ENCODE measurements at regions of chr16 and their contacts with region 1.

Region 1: DNA sequence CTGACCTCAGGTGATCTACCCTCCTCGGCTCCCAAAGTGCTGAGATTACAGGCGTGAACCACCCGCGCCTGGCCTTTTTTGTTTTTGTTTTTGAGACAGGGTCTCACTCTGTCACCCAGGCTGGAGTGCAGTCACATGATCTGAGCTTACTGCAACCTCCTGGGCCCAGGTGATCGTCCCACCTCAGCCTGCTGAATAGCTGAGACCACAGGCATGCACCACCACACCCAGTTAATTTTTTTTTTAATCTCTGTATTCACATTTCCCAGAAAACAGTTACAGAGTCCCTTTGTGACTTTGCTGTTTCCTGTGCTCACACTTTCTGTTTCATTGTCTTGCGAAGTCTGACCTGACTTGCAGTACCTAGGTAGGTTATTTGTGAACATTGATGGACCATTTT is 2.7 kb downstream of the CLUAP1 start:
- DNase-seq: peak in 1 of 2 donors; percentile 66
- ATAC-seq: no peak
- H3K4me3 ChIP-seq: no peak overlapping the region
- H3K4me3 Mint-ChIP-seq: peak overlapping the region; percentile 31
- H3K27ac ChIP-seq: peak overlapping the region; percentile 0
- H3K27ac Mint-ChIP-seq: peak overlapping the region; percentile 45 to 67
- H3K4me1 ChIP-seq: peaks cover 40% of the 10 kb centered on the region
- H3K4me1 Mint-ChIP-seq: peaks cover 25 to 40% of the 10 kb centered on the region in 2 donors
- H3K27me3 ChIP-seq: no peaks in the 10 kb centered on the region
- H3K27me3 Mint-ChIP-seq: no peaks in the 10 kb centered on the region
- CTCF ChIP-seq: no peak

Region 2: GRCh38 chr16:3182608-3183444 is 320.7 kb before region 1 on chr16:
- intact Hi-C with region 1: loop called (anchors 2 kb)
- DNase-seq: peak in 1 of 2 donors; percentile 70
- ATAC-seq: peak; percentile 69 to 81 (median 80)
- H3K4me3 ChIP-seq: peak overlapping the region; percentile 32
- H3K4me3 Mint-ChIP-seq: peak overlapping the region; percentile 83
- H3K27ac ChIP-seq: no peak overlapping the region
- H3K27ac Mint-ChIP-seq: peak overlapping the region; percentile 78 to 82
- H3K4me1 ChIP-seq: peaks cover 23% of the 10 kb centered on the region
- H3K4me1 Mint-ChIP-seq: peaks cover 27 to 28% of the 10 kb centered on the region in 2 donors
- H3K27me3 ChIP-seq: peaks cover 37% of the 10 kb centered on the region
- H3K27me3 Mint-ChIP-seq: peaks cover 65 to 73% of the 10 kb centered on the region in 2 donors
- CTCF ChIP-seq: peak; percentile 54

Region 3: DNA sequence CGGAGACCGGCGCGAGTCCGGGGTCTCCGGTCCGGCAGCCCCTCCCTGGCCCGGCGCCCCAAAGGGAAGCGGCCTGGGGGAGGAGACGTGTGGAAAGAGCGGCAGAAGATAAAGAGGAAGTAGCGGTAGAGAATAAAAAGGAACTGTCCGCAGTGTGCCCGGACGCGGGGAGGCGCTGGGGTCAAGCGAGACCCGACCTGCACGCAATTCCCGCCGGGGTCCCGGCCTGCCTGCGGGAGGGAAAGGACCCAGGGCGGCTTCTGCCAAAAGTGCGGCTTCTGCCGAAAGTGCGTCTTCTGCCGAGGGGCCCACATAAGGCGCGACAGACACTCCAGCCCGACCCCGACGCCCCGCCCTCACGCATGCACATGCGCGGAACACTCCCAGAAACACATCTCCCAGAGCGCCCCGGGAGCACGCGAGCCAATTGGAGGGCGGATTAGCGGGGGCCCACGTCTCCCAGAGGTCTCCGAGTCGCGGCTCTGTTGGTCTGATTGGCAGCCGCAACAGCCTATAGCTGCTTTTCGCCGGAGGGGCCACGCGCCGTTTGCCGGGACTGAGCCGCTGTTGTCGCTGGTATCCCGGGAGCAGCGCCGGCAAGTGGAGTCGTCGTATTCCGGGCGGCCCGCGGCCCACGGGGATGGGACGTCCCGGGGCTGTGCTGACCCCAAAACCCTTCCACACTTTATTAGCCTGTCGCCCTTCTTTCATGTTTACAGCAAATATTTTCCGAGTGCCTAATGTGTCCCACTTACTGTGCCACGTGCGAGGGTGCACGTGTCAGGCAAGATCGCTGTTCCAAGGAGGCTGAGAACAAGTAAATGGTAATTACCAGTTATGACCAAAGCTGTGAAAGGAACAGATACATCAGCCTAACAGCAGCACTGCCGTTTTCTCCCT is 239.1 kb before region 1 on chr16:
- intact Hi-C with region 1: loop called (anchors 1 kb)
- DNase-seq: peak; percentile 93 to 97
- ATAC-seq: peak; percentile 87 to 90 (median 88)
- H3K4me3 ChIP-seq: peak overlapping the region; percentile 77
- H3K4me3 Mint-ChIP-seq: peak overlapping the region; percentile 90
- H3K27ac ChIP-seq: peak overlapping the region; percentile 95
- H3K27ac Mint-ChIP-seq: peak overlapping the region; percentile 92 to 93
- H3K4me1 ChIP-seq: peaks cover 17% of the 10 kb centered on the region
- H3K4me1 Mint-ChIP-seq: peaks cover 18 to 27% of the 10 kb centered on the region in 2 donors
- H3K27me3 ChIP-seq: no peaks in the 10 kb centered on the region
- H3K27me3 Mint-ChIP-seq: no peaks in the 10 kb centered on the region
- CTCF ChIP-seq: no peak

Region 4: DNA sequence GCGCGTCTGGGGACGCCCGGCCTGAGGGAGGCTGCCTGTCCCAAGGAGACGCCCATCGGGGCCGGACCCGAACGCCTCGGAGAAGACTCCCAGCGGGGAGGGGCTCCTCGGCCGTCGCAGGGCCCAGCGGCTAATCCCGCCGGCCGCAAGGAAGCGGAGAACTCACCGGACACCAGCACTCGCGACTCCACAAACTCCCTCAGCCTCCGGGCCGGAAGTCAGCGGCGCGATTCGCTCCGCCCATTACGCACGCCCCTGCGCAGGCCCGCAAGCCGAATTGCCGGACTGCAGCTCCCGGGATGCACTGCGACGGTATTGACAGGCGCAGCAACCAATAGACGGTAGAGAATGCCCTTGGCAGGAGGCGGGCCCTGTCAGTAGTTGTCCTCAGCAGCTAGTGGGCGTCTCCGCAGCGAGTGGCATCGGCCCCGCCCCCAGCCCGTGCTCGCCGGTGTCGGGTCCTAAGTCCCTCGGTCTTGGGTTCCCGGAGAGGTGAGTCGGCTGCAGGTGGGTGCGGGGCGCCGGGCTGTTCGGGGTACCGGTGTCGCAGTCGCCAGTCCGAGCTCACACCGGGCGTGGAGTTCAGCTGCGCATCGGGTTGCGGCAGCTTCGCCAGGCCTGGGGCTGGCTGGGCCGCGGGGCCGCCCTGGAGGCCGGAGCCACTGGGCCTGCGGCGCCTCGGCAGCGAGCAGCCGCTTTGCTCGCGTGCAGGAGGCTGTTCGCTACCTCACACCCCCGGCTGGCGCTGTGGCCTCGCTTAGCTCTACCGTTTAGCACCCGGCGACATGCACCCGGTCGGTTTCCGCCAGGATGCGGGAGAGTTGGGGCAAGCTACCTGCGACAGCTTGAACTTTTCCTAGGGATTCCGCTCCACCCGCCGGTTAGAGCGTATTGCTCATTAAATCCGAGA is 102.5 kb before region 1 on chr16 and contains the starts of genes ZNF174 and ZSCAN32:
- intact Hi-C with region 1: loop called (anchors 1 kb)
- DNase-seq: peak; percentile 98 to 99
- ATAC-seq: peak; percentile 96 to 99 (median 97)
- H3K4me3 ChIP-seq: peak within 1 kb of the TSS; percentile 68
- H3K4me3 Mint-ChIP-seq: peak within 1 kb of the TSS; percentile 95
- H3K27ac ChIP-seq: peak within 1 kb of the TSS; percentile 74
- H3K27ac Mint-ChIP-seq: peak within 1 kb of the TSS; percentile 87 to 90
- H3K4me1 ChIP-seq: peaks cover 19% of the 10 kb centered on the region
- H3K4me1 Mint-ChIP-seq: peaks cover 41 to 48% of the 10 kb centered on the region in 2 donors
- H3K27me3 ChIP-seq: no peaks in the 10 kb centered on the region
- H3K27me3 Mint-ChIP-seq: no peaks in the 10 kb centered on the region
- CTCF ChIP-seq: no peak
- total RNA-seq, gene ZNF174: 3.5 to 9.0 (median 7.5) TPM
- total RNA-seq, gene ZSCAN32: 7.5 to 14.2 (median 14.1) TPM

Region 5: GRCh38 chr16:3457434-3458252 is 45.9 kb before region 1 on chr16:
- intact Hi-C with region 1: loop called (anchors 1 kb)
- DNase-seq: peak; percentile 89 to 96
- ATAC-seq: peak; percentile 88 to 96 (median 91)
- H3K4me3 ChIP-seq: peak overlapping the region; percentile 66
- H3K4me3 Mint-ChIP-seq: peak overlapping the region; percentile 81
- H3K27ac ChIP-seq: peak overlapping the region; percentile 85
- H3K27ac Mint-ChIP-seq: peak overlapping the region; percentile 75 to 86
- H3K4me1 ChIP-seq: peaks cover 40% of the 10 kb centered on the region
- H3K4me1 Mint-ChIP-seq: peaks cover 44 to 47% of the 10 kb centered on the region in 2 donors
- H3K27me3 ChIP-seq: no peaks in the 10 kb centered on the region
- H3K27me3 Mint-ChIP-seq: no peaks in the 10 kb centered on the region
- CTCF ChIP-seq: peak; percentile 19

Region 6: GRCh38 chr16:3536271-3536731 is 32.8 kb after region 1 on chr16:
- intact Hi-C with region 1: no loop called
- DNase-seq: no peak
- ATAC-seq: no peak
- H3K4me3 ChIP-seq: no peak overlapping the region
- H3K4me3 Mint-ChIP-seq: no peak overlapping the region
- H3K27ac ChIP-seq: no peak overlapping the region
- H3K27ac Mint-ChIP-seq: peak overlapping the region; percentile 77
- H3K4me1 ChIP-seq: no peaks in the 10 kb centered on the region
- H3K4me1 Mint-ChIP-seq: peaks cover 19 to 26% of the 10 kb centered on the region in 2 donors
- H3K27me3 ChIP-seq: no peaks in the 10 kb centered on the region
- H3K27me3 Mint-ChIP-seq: no peaks in the 10 kb centered on the region
- CTCF ChIP-seq: no peak

Region 7: GRCh38 chr16:4766874-4767628 is 1263.5 kb after region 1 on chr16 and contains the start of gene ZNF500:
- intact Hi-C with region 1: no loop called
- DNase-seq: peak; percentile 95 to 96
- ATAC-seq: peak; percentile 93 to 97 (median 97)
- H3K4me3 ChIP-seq: peak within 1 kb of the TSS; percentile 69
- H3K4me3 Mint-ChIP-seq: peak within 1 kb of the TSS; percentile 92
- H3K27ac ChIP-seq: peak within 1 kb of the TSS; percentile 73
- H3K27ac Mint-ChIP-seq: peak within 1 kb of the TSS; percentile 86 to 88
- H3K4me1 ChIP-seq: peaks cover 38% of the 10 kb centered on the region
- H3K4me1 Mint-ChIP-seq: peaks cover 30 to 34% of the 10 kb centered on the region in 2 donors
- H3K27me3 ChIP-seq: no peaks in the 10 kb centered on the region
- H3K27me3 Mint-ChIP-seq: no peaks in the 10 kb centered on the region
- CTCF ChIP-seq: no peak
- total RNA-seq, gene ZNF500: 11.4 to 20.3 (median 13.0) TPM

Measured in natural killer cell (primary cell).